Mammary epithelial cell (primary cell): ENCODE measurements at regions of chr19 and their contacts with region 1.

Region 1: DNA sequence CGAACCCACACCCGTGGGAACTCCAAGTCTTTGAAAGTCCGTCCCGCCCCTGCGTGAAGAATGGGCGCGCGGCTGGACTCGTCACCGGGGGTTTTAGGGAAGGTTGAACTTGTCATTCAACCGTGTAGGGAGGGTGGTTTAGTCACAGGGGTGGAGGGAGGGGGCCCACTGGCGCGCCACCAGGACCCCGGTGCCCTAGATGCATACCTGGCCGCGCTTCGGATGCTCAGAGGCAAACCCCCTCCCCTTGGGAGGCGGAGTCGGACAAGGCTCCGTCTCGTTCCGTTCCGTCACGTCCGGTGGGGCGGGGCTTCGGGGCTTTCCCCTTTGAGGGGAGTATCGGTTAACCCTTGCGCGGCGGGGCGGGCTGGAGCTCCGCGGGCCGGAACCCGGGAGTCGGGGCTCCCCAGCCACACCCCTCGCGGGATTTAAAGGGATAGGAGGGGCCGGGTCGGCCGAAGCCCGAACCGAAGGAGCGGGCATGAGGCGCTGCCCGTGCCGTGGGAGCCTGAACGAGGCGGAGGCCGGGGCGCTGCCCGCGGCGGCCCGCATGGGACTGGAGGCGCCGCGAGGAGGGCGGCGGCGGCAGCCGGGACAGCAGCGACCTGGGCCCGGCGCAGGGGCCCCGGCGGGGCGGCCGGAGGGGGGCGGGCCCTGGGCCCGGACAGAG is at the starts of genes COQ8B and ITPKC:
- DNase-seq: peak; percentile 99
- H3K4me3 ChIP-seq: peak within 1 kb of the TSS; percentile 56 to 90 (median 89)
- H3K27ac ChIP-seq: peak within 1 kb of the TSS; percentile 100
- H3K4me1 ChIP-seq: peaks cover 31% of the 10 kb centered on the region
- H3K27me3 ChIP-seq: no peaks in the 10 kb centered on the region
- CTCF ChIP-seq: no peak
- total RNA-seq, gene COQ8B: 23.8 to 32.0 TPM
- total RNA-seq, gene ITPKC: 38.7 to 40.0 TPM

Region 2: GRCh38 chr19:40603389-40604135 is 113.2 kb before region 1 on chr19:
- CTCF ChIA-PET with region 1: no interaction called
- dilution Hi-C with region 1: no loop called
- in situ Hi-C with region 1: no loop called
- intact Hi-C with region 1: loop called (anchors 1 kb)
- DNase-seq: peak; percentile 97
- H3K4me3 ChIP-seq: peak overlapping the region; percentile 32 to 50 (median 37)
- H3K27ac ChIP-seq: peak overlapping the region; percentile 39
- H3K4me1 ChIP-seq: peaks cover 50% of the 10 kb centered on the region
- H3K27me3 ChIP-seq: no peaks in the 10 kb centered on the region
- CTCF ChIP-seq: peak in 1 of 2 donors; percentile 32

Region 3: GRCh38 chr19:40627486-40628279 is 89.1 kb before region 1 on chr19:
- CTCF ChIA-PET with region 1: no interaction called
- dilution Hi-C with region 1: no loop called
- in situ Hi-C with region 1: no loop called
- intact Hi-C with region 1: no loop called
- DNase-seq: no peak
- H3K4me3 ChIP-seq: no peak overlapping the region
- H3K27ac ChIP-seq: no peak overlapping the region
- H3K4me1 ChIP-seq: no peaks in the 10 kb centered on the region
- H3K27me3 ChIP-seq: no peaks in the 10 kb centered on the region
- CTCF ChIP-seq: no peak

Region 4: GRCh38 chr19:40674291-40674690 is 42.5 kb before region 1 on chr19:
- CTCF ChIA-PET with region 1: no interaction called
- dilution Hi-C with region 1: no loop called
- in situ Hi-C with region 1: no loop called
- intact Hi-C with region 1: no loop called
- DNase-seq: no peak
- H3K4me3 ChIP-seq: no peak overlapping the region
- H3K27ac ChIP-seq: no peak overlapping the region
- H3K4me1 ChIP-seq: no peaks in the 10 kb centered on the region
- H3K27me3 ChIP-seq: no peaks in the 10 kb centered on the region
- CTCF ChIP-seq: no peak

Region 5: DNA sequence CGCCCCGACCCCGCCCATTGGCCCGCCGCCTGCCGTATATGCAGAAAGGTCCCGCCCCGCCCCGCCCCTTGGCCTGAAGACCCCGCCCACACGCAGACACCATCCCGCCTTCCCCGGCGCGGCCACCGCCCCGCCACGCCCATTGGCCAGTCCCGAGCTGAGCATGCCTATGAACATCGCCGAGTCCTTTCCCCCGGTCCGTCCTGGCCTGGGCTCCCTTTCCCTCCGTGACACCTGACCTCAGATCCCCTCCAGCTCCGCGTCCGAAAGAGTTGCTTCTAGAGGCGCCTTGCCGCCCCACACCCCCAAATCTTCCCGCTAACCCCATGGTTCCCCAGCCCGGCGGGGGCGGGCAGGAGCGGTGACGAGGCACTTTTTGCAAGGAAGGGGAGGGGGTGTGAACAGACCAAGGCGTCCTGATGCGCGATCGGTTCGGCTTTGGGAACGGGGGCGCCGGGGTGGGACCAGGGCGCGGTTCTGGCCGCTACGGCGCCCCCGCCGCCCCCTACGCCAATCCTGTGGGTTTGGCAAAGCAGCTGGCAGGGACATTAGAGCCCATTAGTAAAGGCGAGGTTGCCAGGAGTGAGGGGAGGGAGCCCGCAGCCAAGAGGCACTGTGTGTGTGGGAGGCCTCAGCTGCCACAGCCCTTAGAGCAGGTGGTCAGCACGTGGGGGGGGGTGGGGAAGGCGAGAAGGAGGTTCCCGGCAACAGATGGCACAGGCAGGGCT is 25.9 kb before region 1 on chr19:
- CTCF ChIA-PET with region 1: no interaction called
- dilution Hi-C with region 1: no loop called
- in situ Hi-C with region 1: no loop called
- intact Hi-C with region 1: loop called (anchors 1 kb)
- DNase-seq: peak; percentile 86
- H3K4me3 ChIP-seq: peak overlapping the region; percentile 29 to 61 (median 39)
- H3K27ac ChIP-seq: peak overlapping the region; percentile 50
- H3K4me1 ChIP-seq: peaks cover 18% of the 10 kb centered on the region
- H3K27me3 ChIP-seq: no peaks in the 10 kb centered on the region
- CTCF ChIP-seq: no peak

Region 6: DNA sequence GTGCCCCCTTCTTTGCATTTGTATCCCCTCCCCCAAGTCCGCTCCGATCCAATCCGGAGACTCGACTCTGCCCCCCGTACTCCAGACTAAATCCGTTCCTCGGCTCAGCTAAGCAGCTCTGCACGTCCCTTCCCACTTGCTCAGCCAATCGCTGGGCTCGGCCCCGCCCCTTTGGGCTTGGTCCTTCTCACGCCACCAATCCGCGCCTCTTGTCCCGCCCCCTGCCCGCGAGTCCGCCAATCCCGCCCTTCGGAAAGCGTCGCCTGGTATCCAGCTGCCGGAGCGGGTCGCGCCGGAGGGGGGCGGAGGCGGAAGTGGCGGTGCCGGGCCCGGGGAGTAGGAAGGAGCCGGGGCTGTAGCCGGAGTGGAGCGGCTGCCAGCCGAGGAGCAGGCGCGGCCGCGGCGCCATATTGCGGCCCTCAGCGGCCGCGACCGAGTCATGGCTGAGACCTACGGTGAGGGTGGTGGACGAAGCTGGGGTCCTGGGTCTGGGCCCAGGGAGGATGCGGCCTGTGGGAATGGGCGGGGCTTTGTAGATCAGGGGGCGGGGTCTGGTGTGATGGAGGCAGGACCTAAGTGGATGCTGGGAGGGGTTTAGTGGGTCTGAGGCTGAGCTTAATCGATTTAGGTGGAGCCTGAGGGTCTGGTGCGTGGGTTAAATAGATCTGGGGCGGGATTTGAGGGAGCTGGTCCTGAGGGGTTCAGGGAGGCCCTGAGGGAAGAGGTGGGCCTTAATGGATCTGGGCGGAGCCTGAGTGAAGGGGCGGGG is 61.3 kb after region 1 on chr19 and contains the start of gene RAB4B:
- CTCF ChIA-PET with region 1: no interaction called
- dilution Hi-C with region 1: no loop called
- in situ Hi-C with region 1: no loop called
- intact Hi-C with region 1: loop called (anchors 1 kb)
- DNase-seq: peak; percentile 99
- H3K4me3 ChIP-seq: peak within 1 kb of the TSS; percentile 57 to 89 (median 60)
- H3K27ac ChIP-seq: peak within 1 kb of the TSS; percentile 99
- H3K4me1 ChIP-seq: peaks cover 27% of the 10 kb centered on the region
- H3K27me3 ChIP-seq: no peaks in the 10 kb centered on the region
- CTCF ChIP-seq: no peak
- total RNA-seq, gene RAB4B: 9.0 to 23.5 TPM

Region 7: DNA sequence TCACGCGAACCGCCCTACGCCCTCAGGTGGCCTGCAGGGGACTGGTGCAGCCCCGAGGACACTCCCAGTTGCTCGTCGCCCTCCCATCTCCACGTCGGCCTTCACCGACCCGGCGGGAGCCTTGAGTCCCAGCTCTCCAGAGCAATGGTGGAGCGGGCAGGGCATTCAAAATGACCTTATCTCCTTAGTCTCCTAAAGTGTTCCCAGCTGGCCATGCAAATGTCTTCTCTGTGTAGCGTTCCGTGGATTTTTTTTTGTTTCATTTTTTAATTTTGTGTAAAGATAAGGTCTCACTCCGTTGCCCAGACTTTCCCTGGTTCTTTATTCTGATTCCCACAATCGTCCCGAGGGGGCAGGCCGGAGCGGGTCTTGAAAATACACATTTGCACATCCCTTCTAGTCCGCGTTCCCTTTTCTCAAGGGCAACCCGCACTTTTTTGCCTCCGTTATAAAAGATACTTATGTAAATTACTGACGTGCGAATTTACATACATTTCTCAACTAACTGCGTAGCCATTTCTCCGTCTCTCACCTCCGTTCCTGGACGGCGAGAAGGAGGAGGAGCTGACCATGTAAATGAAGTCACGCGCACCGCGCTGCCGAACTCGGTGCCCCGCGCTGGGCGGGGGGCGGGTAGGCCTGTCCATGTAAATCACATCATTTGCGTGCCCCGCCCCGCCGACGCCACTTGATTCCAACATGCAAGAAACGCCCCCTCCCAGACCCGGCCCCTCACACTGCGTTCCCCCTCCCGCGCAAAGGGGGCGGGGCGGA is 81.6 kb after region 1 on chr19:
- CTCF ChIA-PET with region 1: no interaction called
- dilution Hi-C with region 1: no loop called
- in situ Hi-C with region 1: no loop called
- intact Hi-C with region 1: loop called (anchors 1 kb)
- DNase-seq: peak; percentile 99
- H3K4me3 ChIP-seq: peak overlapping the region; percentile 50 to 57 (median 54)
- H3K27ac ChIP-seq: peak overlapping the region; percentile 82
- H3K4me1 ChIP-seq: peaks cover 42% of the 10 kb centered on the region
- H3K27me3 ChIP-seq: no peaks in the 10 kb centered on the region
- CTCF ChIP-seq: peak; percentile 23 to 38

Region 8: DNA sequence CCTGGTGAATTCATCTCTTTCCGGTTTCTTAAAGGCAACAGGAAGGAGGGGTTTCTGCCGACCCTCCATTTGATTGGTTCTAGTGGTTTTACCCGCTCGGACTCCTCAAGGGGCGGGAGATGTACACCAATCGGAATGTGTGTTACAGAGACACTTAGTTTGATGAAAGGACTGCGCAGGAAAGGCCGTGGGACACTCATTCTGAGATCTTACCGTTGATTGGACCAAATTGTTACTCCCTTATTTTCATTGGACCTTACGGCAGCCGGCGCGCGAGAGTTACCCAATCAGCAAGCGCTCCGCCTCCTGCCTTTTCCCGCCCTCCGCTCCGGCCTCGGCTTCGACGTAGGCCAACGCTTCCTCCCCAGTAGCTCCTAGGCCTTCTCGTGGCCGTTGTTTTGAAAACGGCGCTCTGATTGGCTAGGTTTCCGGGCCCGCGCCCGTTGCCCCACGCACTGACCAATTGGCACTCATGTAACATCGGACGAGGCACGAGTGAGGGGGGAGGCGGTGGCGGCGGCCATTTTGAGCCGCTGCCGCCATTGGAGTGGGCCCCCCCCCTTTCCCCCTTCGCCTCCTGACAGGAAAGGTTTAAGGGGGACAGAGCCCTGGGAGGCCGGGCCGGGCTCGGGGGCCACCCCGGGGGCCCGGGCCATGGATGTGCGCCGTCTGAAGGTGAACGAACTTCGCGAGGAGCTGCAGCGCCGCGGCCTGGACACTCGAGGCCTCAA is 547.2 kb after region 1 on chr19 and contains the start of gene HNRNPUL1:
- CTCF ChIA-PET with region 1: no interaction called
- dilution Hi-C with region 1: no loop called
- in situ Hi-C with region 1: no loop called
- intact Hi-C with region 1: loop called (anchors 5 kb)
- DNase-seq: peak; percentile 100
- H3K4me3 ChIP-seq: peak within 1 kb of the TSS; percentile 85 to 93 (median 87)
- H3K27ac ChIP-seq: peak within 1 kb of the TSS; percentile 92
- H3K4me1 ChIP-seq: peaks cover 20% of the 10 kb centered on the region
- H3K27me3 ChIP-seq: no peaks in the 10 kb centered on the region
- CTCF ChIP-seq: peak in 1 of 2 donors; percentile 51
- total RNA-seq, gene HNRNPUL1: 80.7 to 175 TPM